B cell (primary cell): ENCODE measurements at regions of chr3 and their contacts with region 1.

Region 1: GRCh38 chr3:108589146-108589997 is at the starts of genes CIP2A and DZIP3:
- DNase-seq: peak; percentile 97
- ATAC-seq: peak; percentile 86
- H3K4me3 ChIP-seq: peak within 1 kb of the TSS; percentile 77 to 99 (median 94)
- H3K4me3 Mint-ChIP-seq: peak within 1 kb of the TSS; percentile 99
- H3K27ac ChIP-seq: peak within 1 kb of the TSS; percentile 96 to 99
- H3K27ac Mint-ChIP-seq: peak within 1 kb of the TSS; percentile 100
- H3K4me1 ChIP-seq: peaks cover 12 to 16% of the 10 kb centered on the region in 2 donors
- H3K4me1 Mint-ChIP-seq: peaks cover 17% of the 10 kb centered on the region
- H3K27me3 ChIP-seq: no peaks in the 10 kb centered on the region
- H3K27me3 Mint-ChIP-seq: no peaks in the 10 kb centered on the region
- CTCF ChIP-seq: no peak
- total RNA-seq, gene CIP2A: 8.8 and 11.0 TPM in 2 replicates
- total RNA-seq, gene DZIP3: 10.5 and 11.1 TPM in 2 replicates

Region 2: GRCh38 chr3:107429320-107430181 is 1159.8 kb before region 1 on chr3:
- CTCF ChIA-PET with region 1: no interaction called
- POLR2A ChIA-PET with region 1: no interaction called
- intact Hi-C with region 1: loop called (anchors 10 kb)
- DNase-seq: peak; percentile 82
- ATAC-seq: peak; percentile 52
- H3K4me3 ChIP-seq: peak overlapping the region; percentile 44 to 80 (median 70)
- H3K4me3 Mint-ChIP-seq: peak overlapping the region; percentile 97
- H3K27ac ChIP-seq: no peak overlapping the region
- H3K27ac Mint-ChIP-seq: peak overlapping the region; percentile 85
- H3K4me1 ChIP-seq: peaks cover 49% of the 10 kb centered on the region in 2 donors
- H3K4me1 Mint-ChIP-seq: peaks cover 59% of the 10 kb centered on the region
- H3K27me3 ChIP-seq: no peaks in the 10 kb centered on the region
- H3K27me3 Mint-ChIP-seq: no peaks in the 10 kb centered on the region
- CTCF ChIP-seq: peak; percentile 90

Region 3: GRCh38 chr3:107458871-107459270 is 1130.5 kb before region 1 on chr3:
- CTCF ChIA-PET with region 1: no interaction called
- POLR2A ChIA-PET with region 1: no interaction called
- intact Hi-C with region 1: no loop called
- DNase-seq: no peak
- ATAC-seq: no peak
- H3K4me3 ChIP-seq: no peak overlapping the region
- H3K4me3 Mint-ChIP-seq: no peak overlapping the region
- H3K27ac ChIP-seq: no peak overlapping the region
- H3K27ac Mint-ChIP-seq: no peak overlapping the region
- H3K4me1 ChIP-seq: no peaks in the 10 kb centered on the region
- H3K4me1 Mint-ChIP-seq: no peaks in the 10 kb centered on the region
- H3K27me3 ChIP-seq: no peaks in the 10 kb centered on the region
- H3K27me3 Mint-ChIP-seq: no peaks in the 10 kb centered on the region
- CTCF ChIP-seq: no peak

Region 4: DNA sequence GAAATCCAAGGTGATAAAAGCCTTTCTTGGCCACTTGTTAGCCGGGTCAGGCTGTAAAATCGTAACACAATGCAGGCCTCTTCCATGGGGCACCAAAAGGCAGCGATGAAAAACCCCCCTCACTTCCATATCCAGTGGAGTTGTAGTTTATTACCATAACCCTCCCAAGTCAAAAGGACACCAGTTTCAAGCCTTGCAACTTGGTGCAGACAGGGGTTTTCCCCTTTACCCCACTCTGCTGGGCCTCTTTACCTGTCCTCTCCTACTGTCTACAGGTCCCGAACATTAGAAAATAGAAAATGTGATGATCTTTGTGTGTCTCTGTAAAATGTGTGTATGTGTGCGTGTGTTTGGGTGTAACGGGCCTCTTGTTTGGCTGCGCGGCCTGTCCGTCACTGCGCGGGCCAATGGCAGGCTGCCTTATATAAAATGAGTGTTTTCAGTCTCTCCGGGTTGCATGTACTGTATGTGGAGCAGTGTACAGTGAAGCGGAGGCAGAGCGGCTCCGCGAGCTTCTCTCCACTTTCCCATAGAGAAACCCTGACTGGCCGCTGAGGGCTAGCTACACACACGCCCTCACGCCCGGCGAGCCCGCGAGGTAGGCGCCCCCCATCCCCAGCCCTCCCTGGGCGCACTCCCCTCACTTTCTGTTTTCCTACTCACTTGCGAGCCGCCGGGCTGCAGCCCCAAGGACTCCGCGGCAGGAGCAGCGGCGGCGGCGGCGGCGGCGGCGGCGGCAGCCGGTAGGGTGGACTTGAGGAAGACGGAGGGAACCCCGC is 1066.7 kb before region 1 on chr3 and contains the start of gene BBX:
- CTCF ChIA-PET with region 1: no interaction called
- POLR2A ChIA-PET with region 1: no interaction called
- intact Hi-C with region 1: loop called (anchors 1 kb)
- DNase-seq: peak; percentile 97
- ATAC-seq: peak; percentile 84
- H3K4me3 ChIP-seq: peak within 1 kb of the TSS; percentile 74 to 96 (median 92)
- H3K4me3 Mint-ChIP-seq: peak within 1 kb of the TSS; percentile 98
- H3K27ac ChIP-seq: peak within 1 kb of the TSS; percentile 81 to 92
- H3K27ac Mint-ChIP-seq: peak within 1 kb of the TSS; percentile 99
- H3K4me1 ChIP-seq: peaks cover 24 to 27% of the 10 kb centered on the region in 2 donors
- H3K4me1 Mint-ChIP-seq: peaks cover 34% of the 10 kb centered on the region
- H3K27me3 ChIP-seq: no peaks in the 10 kb centered on the region
- H3K27me3 Mint-ChIP-seq: no peaks in the 10 kb centered on the region
- CTCF ChIP-seq: no peak
- total RNA-seq, gene BBX: 131 and 133 TPM in 2 replicates

Region 5: DNA sequence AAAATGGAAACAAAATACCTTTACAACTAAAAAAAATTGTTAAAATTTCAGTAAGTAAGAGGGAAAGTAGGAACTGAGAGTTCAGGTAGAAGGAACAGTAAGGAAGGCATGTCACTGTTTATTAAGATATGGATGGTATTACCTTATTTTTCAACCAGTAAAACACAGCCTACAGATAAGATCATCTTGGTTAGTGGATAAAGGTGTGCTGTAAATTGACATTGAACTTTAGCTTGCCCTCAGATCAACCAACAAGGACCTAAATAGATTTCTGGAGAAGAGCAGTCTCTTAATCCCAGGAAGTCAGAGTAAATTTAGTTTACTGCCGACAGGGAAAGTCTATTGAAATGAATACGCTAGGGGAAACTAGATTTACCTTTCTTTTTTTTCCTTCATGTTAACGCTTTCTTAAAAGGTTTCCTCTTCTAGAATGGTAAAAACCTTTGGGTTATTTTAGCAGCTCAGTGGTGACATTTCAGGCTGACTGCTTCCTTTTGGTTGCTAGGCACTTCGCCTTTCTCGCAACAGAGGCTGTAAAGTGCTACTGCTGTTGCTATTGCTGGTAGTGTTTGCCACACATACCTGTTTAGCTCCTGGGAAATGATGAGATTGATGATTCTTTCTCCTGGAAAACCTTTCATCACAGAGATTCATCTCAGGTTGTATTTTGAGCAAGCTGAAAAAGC is 13.0 kb after region 1 on chr3:
- CTCF ChIA-PET with region 1: interaction called, 15 read pairs
- POLR2A ChIA-PET with region 1: interaction called, 16 read pairs
- intact Hi-C with region 1: no loop called
- DNase-seq: peak; percentile 55
- ATAC-seq: peak; percentile 82
- H3K4me3 ChIP-seq: peak overlapping the region in 4 of 5 experiments; percentile 0 to 47 (median 15)
- H3K4me3 Mint-ChIP-seq: peak overlapping the region; percentile 56
- H3K27ac ChIP-seq: peak overlapping the region; percentile 51 to 85
- H3K27ac Mint-ChIP-seq: peak overlapping the region; percentile 89
- H3K4me1 ChIP-seq: peaks cover 31 to 33% of the 10 kb centered on the region in 2 donors
- H3K4me1 Mint-ChIP-seq: peaks cover 28% of the 10 kb centered on the region
- H3K27me3 ChIP-seq: no peaks in the 10 kb centered on the region
- H3K27me3 Mint-ChIP-seq: no peaks in the 10 kb centered on the region
- CTCF ChIP-seq: no peak